ENCODE measurements at regions of chr12 and their contacts with region 1.

Region 1: DNA sequence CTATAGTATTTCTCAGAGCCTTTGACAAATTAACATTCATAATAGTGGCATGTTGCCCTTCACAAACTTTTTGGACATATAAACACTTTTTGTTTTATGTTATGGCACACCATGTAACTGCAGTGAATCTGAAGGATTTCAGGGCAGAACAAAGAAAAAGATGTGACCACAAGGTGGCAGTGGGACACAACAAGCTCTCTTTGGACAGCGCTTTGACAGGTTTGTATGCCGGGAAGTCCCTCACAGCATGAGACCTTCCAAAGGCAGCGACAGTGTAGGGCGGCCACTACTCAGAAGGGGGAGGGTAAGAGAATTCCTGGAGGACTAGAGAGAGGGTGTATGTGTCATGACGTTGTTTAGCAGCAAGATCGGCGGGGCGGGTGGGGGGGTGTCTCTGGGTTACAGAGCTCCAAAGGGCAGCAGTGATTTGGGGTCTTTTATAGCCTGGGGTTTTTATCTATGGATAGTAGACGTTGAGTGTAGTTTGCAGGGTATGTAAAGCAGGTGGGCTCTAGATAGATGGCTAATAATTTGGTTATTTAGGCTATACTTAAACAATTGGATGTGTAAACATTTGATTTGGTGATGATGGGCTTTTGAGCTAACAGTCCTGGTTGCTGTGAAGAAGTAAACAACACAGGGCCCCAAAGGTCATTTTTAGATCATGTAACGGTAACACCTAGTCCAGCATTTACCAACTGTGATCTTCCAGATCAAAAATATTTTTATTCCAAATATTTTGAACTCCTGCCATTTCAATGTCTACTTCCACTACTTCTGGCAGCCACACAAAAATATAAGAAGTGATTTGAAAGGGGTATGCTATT is 22.9 kb downstream of the ETFBKMT start:
- DNase-seq: peak; percentile 77
- H3K4me3 Mint-ChIP-seq: no peak overlapping the region
- H3K27ac Mint-ChIP-seq: peak overlapping the region; percentile 44
- H3K4me1 Mint-ChIP-seq: peaks cover 9% of the 10 kb centered on the region
- H3K27me3 Mint-ChIP-seq: no peaks in the 10 kb centered on the region

Region 2: GRCh38 chr12:31659087-31659933 is 23.0 kb before region 1 on chr12 and contains the start of gene ETFBKMT:
- CTCF ChIA-PET with region 1: interaction called, 16 read pairs
- POLR2A ChIA-PET with region 1: no interaction called
- intact Hi-C with region 1: loop called (anchors 1 kb)
- DNase-seq: peak; percentile 97
- H3K4me3 Mint-ChIP-seq: peak within 1 kb of the TSS; percentile 96
- H3K27ac Mint-ChIP-seq: peak within 1 kb of the TSS; percentile 95
- H3K4me1 Mint-ChIP-seq: peaks cover 7% of the 10 kb centered on the region
- H3K27me3 Mint-ChIP-seq: no peaks in the 10 kb centered on the region
- total RNA-seq, gene ETFBKMT: 1.1 to 1.3 TPM

Region 3: GRCh38 chr12:31728917-31729640 is 46.7 kb after region 1 on chr12 and contains the start of gene AMN1:
- CTCF ChIA-PET with region 1: interaction called, 3 read pairs
- POLR2A ChIA-PET with region 1: no interaction called
- intact Hi-C with region 1: loop called (anchors 2 kb)
- DNase-seq: peak; percentile 100
- H3K4me3 Mint-ChIP-seq: peak within 1 kb of the TSS; percentile 96
- H3K27ac Mint-ChIP-seq: peak within 1 kb of the TSS; percentile 97
- H3K4me1 Mint-ChIP-seq: peaks cover 41% of the 10 kb centered on the region
- H3K27me3 Mint-ChIP-seq: no peaks in the 10 kb centered on the region
- total RNA-seq, gene AMN1: 3.2 to 4.7 TPM

Region 4: DNA sequence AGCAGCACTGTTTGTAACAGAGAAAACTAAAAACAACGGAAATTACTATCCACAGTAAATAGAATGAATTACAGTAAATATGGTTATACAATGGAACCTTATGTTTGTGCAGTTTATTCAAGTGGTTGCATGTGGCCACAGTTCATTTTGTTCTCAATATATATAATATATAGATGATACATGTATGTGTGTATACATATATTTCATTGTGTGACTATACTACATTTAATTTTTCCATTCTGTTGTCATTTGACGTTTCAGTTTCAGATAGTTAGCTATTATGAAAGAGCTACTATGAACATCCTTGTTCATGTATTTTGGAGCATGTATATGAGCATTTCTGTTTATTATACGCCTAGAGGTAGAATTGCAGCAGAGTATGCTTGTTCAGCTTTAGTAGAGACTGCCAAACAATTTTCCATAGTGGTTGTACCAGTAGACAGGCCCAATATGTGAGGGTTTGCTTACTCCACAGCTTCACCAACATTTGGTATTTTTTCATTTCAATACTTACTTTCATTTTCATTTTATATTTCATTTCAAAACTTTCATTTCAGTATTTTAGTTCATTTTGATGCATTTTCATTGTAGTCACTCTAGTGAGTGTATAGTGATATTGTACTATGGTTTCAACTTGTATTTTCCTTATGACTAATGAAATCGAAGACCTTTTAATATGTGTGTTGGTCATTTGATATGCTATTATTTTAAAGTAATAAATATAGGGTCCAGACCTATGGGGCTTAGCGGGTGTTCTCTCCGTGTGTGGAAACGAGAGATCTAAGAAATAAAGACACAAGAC is 575.5 kb after region 1 on chr12:
- CTCF ChIA-PET with region 1: no interaction called
- POLR2A ChIA-PET with region 1: no interaction called
- intact Hi-C with region 1: loop called (anchors 1 kb)
- DNase-seq: no peak
- H3K4me3 Mint-ChIP-seq: no peak overlapping the region
- H3K27ac Mint-ChIP-seq: no peak overlapping the region
- H3K4me1 Mint-ChIP-seq: peaks cover 11% of the 10 kb centered on the region
- H3K27me3 Mint-ChIP-seq: no peaks in the 10 kb centered on the region

Region 5: GRCh38 chr12:32312049-32312670 is 629.8 kb after region 1 on chr12:
- CTCF ChIA-PET with region 1: interaction called, 19 read pairs
- POLR2A ChIA-PET with region 1: interaction called, 4 read pairs
- intact Hi-C with region 1: loop called (anchors 1 kb)
- DNase-seq: no peak
- H3K4me3 Mint-ChIP-seq: no peak overlapping the region
- H3K27ac Mint-ChIP-seq: no peak overlapping the region
- H3K4me1 Mint-ChIP-seq: no peaks in the 10 kb centered on the region
- H3K27me3 Mint-ChIP-seq: no peaks in the 10 kb centered on the region

Measured in activated CD4-positive, alpha-beta memory T cell treated with anti-CD3 and anti-CD28 coated beads for 36 hours (primary cell).